ENCODE measurements at regions of chr7 and their contacts with region 1.

Region 1: DNA sequence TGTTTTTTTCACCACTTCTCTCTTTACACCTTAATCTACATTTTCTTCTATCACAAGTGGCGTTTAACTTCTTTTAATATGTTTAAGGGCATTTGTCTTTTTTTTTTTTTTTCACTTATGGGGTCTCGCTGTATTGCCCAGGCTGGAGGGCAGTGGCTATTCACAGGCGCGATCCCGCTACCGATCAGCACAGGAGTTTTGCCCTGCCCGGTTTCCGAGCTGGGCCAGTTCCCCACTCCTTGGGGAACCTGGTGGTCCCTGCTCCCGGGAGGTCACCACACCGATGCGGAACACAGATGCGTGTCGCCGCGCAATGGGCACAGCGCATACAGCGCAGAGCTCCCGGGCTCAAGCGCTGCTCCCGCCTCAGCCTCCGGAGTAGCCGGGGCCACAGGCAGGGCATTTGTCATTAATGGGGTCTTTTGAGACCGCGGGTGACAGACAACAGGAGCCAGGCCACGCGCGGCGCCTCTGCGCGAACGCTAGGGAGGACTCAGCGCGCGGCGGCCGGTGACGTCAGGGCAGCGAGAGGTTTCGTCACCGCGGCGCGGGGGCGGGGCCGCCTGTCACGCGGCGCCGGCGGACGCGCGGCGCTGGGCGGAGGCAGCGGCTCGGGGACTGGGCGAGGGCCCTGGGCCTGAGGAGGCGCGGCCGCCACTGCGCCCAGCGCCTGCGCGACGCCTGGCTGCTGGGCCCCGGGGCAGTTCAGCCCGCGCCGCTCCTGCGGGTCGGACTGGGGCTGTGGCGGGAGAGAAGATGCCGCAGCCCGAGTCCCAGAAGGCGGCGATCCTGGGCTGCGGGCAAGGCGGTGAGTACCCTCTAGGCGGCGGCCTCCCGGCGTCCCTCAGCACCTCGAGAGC is at the start of gene GALNT11:
- DNase-seq: peak; percentile 55 to 91 (median 80)
- H3K4me3 ChIP-seq: peak within 1 kb of the TSS; percentile 47 to 99 (median 86)
- H3K27ac ChIP-seq: peak within 1 kb of the TSS in 57 of 59 donors; percentile 33 to 96 (median 86)
- H3K27me3 ChIP-seq: no peaks in the 10 kb centered on the region
- CTCF ChIP-seq: peak in 33 of 56 donors; percentile 14 to 60 (median 35)
- total RNA-seq, gene GALNT11: 30.5 to 104 (median 66.4) TPM

Region 2: GRCh38 chr7:152086513-152086912 is 61.2 kb after region 1 on chr7:
- intact Hi-C with region 1: no loop called
- DNase-seq: no peak
- H3K4me3 ChIP-seq: no peak overlapping the region
- H3K27ac ChIP-seq: no peak overlapping the region
- H3K27me3 ChIP-seq: no peaks in the 10 kb centered on the region
- CTCF ChIP-seq: no peak

Region 3: GRCh38 chr7:152759949-152760853 is 734.9 kb after region 1 on chr7:
- intact Hi-C with region 1: loop called in 1 of 2 experiments (anchors 10 kb)
- DNase-seq: peak; percentile 23 to 70 (median 50)
- H3K4me3 ChIP-seq: peak overlapping the region; percentile 68 to 100 (median 95)
- H3K27ac ChIP-seq: peak overlapping the region; percentile 43 to 96 (median 88)
- H3K27me3 ChIP-seq: no peaks in the 10 kb centered on the region
- CTCF ChIP-seq: peak in 3 of 56 donors; percentile 6 to 15 (median 10)